B cell (primary cell): ENCODE measurements at regions of chr7 and their contacts with region 1.

Region 1: GRCh38 chr7:73851410-73852234 is 9.3 kb upstream of the METTL27 start:
- DNase-seq: no peak
- ATAC-seq: peak; percentile 41
- H3K4me3 ChIP-seq: no peak overlapping the region
- H3K4me3 Mint-ChIP-seq: no peak overlapping the region
- H3K27ac ChIP-seq: no peak overlapping the region
- H3K27ac Mint-ChIP-seq: no peak overlapping the region
- H3K4me1 ChIP-seq: peaks cover 3 to 10% of the 10 kb centered on the region in 2 donors
- H3K4me1 Mint-ChIP-seq: peaks cover 13% of the 10 kb centered on the region
- H3K27me3 ChIP-seq: peaks cover 0 to 16% (median 3%) of the 10 kb centered on the region in 4 experiments
- H3K27me3 Mint-ChIP-seq: peaks cover 29% of the 10 kb centered on the region
- CTCF ChIP-seq: no peak

Region 2: GRCh38 chr7:73628504-73628903 is 223.1 kb before region 1 on chr7:
- CTCF ChIA-PET with region 1: interaction called, 10 read pairs
- POLR2A ChIA-PET with region 1: no interaction called
- intact Hi-C with region 1: no loop called
- DNase-seq: no peak
- ATAC-seq: no peak
- H3K4me3 ChIP-seq: no peak overlapping the region
- H3K4me3 Mint-ChIP-seq: no peak overlapping the region
- H3K27ac ChIP-seq: no peak overlapping the region
- H3K27ac Mint-ChIP-seq: no peak overlapping the region
- H3K4me1 ChIP-seq: peaks cover 7 to 12% of the 10 kb centered on the region in 2 donors
- H3K4me1 Mint-ChIP-seq: peaks cover 7% of the 10 kb centered on the region
- H3K27me3 ChIP-seq: peaks cover 0 to 53% (median 15%) of the 10 kb centered on the region in 4 experiments
- H3K27me3 Mint-ChIP-seq: peaks cover 44% of the 10 kb centered on the region
- CTCF ChIP-seq: no peak

Region 3: DNA sequence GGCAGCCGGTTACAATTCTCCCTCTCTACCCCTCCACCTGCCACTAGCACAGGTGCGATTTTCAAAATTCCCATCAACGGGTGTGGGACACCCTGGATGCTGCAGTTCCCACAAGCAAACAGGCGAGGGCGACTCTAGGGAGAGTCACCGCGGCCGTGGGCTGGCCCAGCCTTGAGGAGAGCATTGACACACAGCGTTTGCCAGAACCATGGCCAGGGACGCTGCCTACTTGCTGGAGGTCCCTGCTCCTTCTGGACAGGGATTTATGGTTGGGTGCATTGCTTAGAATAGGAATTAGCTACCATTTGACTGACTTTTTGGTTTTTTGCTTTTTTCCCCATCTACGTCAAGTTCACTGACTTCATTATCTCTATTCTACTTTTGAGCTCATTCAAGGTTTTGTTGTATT is 39.9 kb before region 1 on chr7:
- CTCF ChIA-PET with region 1: interaction called, 41 read pairs
- POLR2A ChIA-PET with region 1: no interaction called
- intact Hi-C with region 1: no loop called
- DNase-seq: peak; percentile 53
- ATAC-seq: peak; percentile 56
- H3K4me3 ChIP-seq: no peak overlapping the region
- H3K4me3 Mint-ChIP-seq: no peak overlapping the region
- H3K27ac ChIP-seq: no peak overlapping the region
- H3K27ac Mint-ChIP-seq: no peak overlapping the region
- H3K4me1 ChIP-seq: no peaks in the 10 kb centered on the region
- H3K4me1 Mint-ChIP-seq: no peaks in the 10 kb centered on the region
- H3K27me3 ChIP-seq: peaks cover 0 to 13% (median 0%) of the 10 kb centered on the region in 4 experiments
- H3K27me3 Mint-ChIP-seq: peaks cover 18% of the 10 kb centered on the region
- CTCF ChIP-seq: peak; percentile 47